HEK293T (cell line): ENCODE measurements at regions of chr10 and their contacts with region 1.

Region 1: DNA sequence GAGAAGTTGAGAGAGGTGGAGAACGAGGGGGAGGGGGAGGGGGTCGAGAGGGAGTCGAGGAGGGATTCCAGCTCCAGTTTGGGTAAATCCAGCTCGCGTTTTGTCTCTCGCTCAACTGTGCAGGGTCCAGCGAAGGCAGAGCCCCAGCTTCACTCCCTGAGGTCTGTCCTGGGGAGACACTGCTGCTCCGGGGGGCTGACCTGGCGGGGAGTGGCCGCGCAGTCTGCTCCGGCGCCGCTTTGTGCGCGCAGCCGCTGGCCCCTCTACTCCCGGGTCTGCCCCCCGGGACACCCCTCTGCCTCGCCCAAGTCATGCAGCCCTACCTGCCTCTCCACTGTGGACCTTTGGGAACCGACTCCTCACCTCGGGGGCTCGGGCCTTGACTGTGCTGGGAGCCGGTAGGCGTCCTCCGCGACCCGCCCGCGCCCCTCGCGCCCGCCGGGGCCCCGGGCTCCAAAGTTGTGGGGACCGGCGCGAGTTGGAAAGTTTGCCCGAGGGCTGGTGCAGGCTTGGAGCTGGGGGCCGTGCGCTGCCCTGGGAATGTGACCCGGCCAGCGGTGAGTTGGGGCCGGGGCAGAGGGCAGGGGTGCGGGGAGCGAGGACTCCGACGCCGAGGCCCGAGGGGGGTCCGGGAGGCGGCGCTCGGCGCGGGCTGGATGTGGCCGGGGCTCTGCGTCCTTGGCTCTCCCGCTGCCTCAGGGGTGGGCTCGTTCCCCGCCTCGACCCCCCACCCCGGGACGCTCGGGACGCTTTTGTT is at the start of gene TET1:
- DNase-seq: peak; percentile 74

Region 2: DNA sequence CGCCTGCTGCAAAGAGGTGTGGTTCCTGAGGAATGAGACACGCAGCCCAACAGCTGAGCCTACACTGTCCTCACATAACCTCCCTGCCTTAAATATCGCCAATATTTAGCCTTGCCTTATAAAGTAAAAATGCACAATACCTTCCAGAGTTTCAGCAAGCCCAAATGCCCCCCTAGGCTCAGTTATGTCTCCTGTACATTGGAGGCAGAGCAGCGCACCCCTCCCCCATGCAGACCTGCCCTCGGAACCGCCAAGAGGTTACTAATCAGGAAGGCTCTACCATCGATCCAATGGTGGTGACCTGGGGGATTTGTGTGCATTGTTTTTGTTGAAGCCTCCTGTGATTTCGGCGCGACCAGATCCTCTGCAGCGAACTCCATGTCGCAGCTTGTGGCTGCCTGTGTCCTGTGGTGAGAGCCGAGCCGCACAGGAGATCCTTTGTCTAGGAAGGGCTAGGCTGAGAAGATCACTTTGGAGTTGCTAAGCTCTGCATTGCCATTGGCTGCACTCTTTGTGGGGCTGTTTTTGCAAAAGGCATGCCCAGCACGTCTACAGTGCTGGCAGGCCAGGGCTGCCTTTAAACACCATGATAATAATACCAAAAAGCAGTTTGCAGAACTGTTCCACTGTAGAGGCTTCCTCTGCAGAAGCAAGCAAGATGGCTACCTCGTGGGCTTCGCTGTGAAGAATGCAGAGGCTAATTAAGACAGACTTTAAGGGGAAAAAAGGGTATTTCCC is 39.8 kb after region 1 on chr10:
- CTCF ChIA-PET with region 1: no interaction called
- POLR2A ChIA-PET with region 1: interaction called, 26 read pairs
- DNase-seq: peak; percentile 78

Region 3: GRCh38 chr10:68720793-68721672 is 160.7 kb after region 1 on chr10 and contains the start of gene CCAR1:
- CTCF ChIA-PET with region 1: no interaction called
- POLR2A ChIA-PET with region 1: interaction called, 16 read pairs
- DNase-seq: peak; percentile 93